ENCODE measurements at regions of chr15 and their contacts with region 1.

Region 1: DNA sequence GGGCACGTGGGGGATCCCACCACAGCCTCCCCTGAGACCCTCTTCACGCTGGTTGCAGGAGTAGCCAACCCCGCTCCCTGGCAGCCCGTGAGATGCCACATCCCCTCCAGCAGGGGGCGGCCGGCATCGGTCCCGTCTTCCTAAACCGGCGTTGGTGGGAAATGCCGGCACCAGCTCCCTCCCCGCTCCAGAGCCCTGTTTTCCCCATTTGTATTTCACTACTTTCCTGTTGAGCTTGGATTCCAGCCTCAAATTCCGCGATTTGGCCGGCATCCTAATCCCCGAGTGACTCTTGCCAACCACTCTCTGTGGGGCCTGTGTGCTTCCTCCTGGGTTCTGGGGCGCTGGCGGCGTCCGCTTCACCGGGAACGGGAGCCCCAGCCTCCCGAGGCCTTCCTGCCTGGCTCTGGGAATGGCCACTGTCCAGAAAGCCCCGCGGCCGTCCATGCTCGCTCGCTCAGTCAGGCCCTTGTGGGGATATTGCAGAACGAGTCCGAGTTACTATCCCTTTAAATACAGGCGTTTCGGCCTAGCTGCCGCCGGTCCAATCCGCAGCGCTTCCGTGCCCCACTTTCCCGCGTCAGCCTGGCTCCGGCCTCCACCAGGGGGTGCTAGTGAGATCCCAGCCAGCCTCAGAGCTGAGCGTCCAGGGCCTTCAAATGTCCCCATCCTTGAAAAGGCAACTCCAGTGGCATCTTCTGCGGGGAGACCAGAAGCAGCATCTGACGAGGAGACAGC is 8.1 kb upstream of the ADAMTS17 start:
- DNase-seq: peak; percentile 92
- H3K4me3 ChIP-seq: peak overlapping the region; percentile 57 to 58; a peak in 3 of 4 replicates
- H3K27ac ChIP-seq: peak overlapping the region in 1 of 2 experiments; percentile 79; a peak in 2 of 4 replicates
- H3K4me1 ChIP-seq: peaks cover 0 to 3% of the 10 kb centered on the region in 2 experiments; a peak in 1 of 4 replicates
- H3K27me3 ChIP-seq: no peaks in the 10 kb centered on the region
- CTCF ChIP-seq: peak; percentile 46
- EP300 ChIP-seq: no peak
- RAD21 ChIP-seq: peak; percentile 66

Region 2: GRCh38 chr15:100078511-100079220 is 271.2 kb before region 1 on chr15:
- CTCF ChIA-PET with region 1: no interaction called
- POLR2A ChIA-PET with region 1: no interaction called
- DNase-seq: no peak
- H3K4me3 ChIP-seq: no peak overlapping the region
- H3K27ac ChIP-seq: no peak overlapping the region
- H3K4me1 ChIP-seq: no peaks in the 10 kb centered on the region
- H3K27me3 ChIP-seq: no peaks in the 10 kb centered on the region
- CTCF ChIP-seq: no peak
- EP300 ChIP-seq: no peak
- RAD21 ChIP-seq: no peak

Region 3: DNA sequence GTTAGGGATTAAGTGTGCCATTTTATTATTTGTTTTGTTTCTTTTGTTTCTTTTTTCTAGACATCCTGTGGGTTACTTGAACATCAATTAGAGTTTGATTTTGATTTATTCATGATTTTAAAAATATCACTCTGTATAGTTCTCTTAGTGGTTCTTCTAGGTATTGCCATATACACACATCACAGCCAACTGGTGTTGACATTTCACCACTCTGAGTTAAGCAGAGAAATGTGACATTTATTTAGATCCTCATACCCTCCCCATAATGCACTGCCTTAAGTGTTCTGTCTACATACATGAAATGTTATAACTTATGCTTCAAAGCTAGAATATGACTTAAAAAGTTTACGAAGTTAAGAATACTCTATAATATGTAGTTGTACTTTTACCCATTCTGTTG is 171.7 kb before region 1 on chr15:
- CTCF ChIA-PET with region 1: no interaction called
- POLR2A ChIA-PET with region 1: no interaction called
- DNase-seq: no peak
- H3K4me3 ChIP-seq: no peak overlapping the region
- H3K27ac ChIP-seq: no peak overlapping the region
- H3K4me1 ChIP-seq: no peaks in the 10 kb centered on the region
- H3K27me3 ChIP-seq: no peaks in the 10 kb centered on the region
- CTCF ChIP-seq: no peak
- EP300 ChIP-seq: no peak
- RAD21 ChIP-seq: no peak

Region 4: GRCh38 chr15:100311154-100311625 is 38.7 kb before region 1 on chr15:
- CTCF ChIA-PET with region 1: interaction called, 10 read pairs
- POLR2A ChIA-PET with region 1: no interaction called
- DNase-seq: peak; percentile 41
- H3K4me3 ChIP-seq: no peak overlapping the region
- H3K27ac ChIP-seq: no peak overlapping the region; a peak in 1 of 4 replicates
- H3K4me1 ChIP-seq: peaks cover 0 to 12% of the 10 kb centered on the region in 2 experiments; a peak in 1 of 4 replicates
- H3K27me3 ChIP-seq: no peaks in the 10 kb centered on the region
- CTCF ChIP-seq: no peak
- EP300 ChIP-seq: no peak
- RAD21 ChIP-seq: no peak

Region 5: DNA sequence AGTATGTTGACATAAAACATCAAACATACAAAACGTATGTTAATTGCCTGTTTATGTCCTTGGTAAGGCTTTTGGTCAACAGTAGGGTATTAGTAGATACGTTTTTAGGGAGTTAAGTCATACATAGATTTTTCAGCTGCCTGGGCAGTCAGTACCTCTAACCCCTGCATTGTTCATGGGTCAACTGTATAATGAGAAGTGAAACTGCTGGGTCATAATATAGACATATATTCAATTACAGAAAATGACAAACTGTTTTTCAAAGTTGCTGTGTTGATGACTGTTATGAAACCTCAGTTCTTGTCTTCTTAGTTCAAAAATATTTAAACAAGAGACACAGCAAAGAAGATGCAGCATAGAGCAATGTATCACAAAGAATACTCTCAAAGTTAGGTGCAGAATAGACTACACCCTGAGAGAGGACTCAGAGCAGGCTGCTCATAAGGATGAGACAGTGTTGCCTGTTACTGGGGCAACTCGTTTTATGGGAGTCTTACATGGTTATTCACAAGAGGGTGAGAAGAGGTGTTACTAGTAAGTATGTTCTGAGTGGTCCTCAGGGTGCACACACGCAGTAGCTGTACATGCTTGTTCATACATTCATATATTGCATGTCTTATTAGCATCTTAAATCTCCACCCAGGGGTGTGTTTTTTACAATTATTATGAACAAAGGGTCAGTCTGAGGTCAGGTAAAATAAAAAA is 45.0 kb after region 1 on chr15:
- CTCF ChIA-PET with region 1: interaction called, 184 read pairs
- POLR2A ChIA-PET with region 1: no interaction called
- DNase-seq: no peak
- H3K4me3 ChIP-seq: no peak overlapping the region
- H3K27ac ChIP-seq: no peak overlapping the region
- H3K4me1 ChIP-seq: no peaks in the 10 kb centered on the region
- H3K27me3 ChIP-seq: no peaks in the 10 kb centered on the region
- CTCF ChIP-seq: no peak
- EP300 ChIP-seq: no peak
- RAD21 ChIP-seq: no peak

Region 6: GRCh38 chr15:100526027-100526481 is 176.2 kb after region 1 on chr15:
- CTCF ChIA-PET with region 1: interaction called, 11 read pairs
- POLR2A ChIA-PET with region 1: no interaction called
- DNase-seq: no peak
- H3K4me3 ChIP-seq: no peak overlapping the region
- H3K27ac ChIP-seq: no peak overlapping the region
- H3K4me1 ChIP-seq: no peaks in the 10 kb centered on the region
- H3K27me3 ChIP-seq: no peaks in the 10 kb centered on the region
- CTCF ChIP-seq: no peak
- EP300 ChIP-seq: no peak
- RAD21 ChIP-seq: no peak

Region 7: DNA sequence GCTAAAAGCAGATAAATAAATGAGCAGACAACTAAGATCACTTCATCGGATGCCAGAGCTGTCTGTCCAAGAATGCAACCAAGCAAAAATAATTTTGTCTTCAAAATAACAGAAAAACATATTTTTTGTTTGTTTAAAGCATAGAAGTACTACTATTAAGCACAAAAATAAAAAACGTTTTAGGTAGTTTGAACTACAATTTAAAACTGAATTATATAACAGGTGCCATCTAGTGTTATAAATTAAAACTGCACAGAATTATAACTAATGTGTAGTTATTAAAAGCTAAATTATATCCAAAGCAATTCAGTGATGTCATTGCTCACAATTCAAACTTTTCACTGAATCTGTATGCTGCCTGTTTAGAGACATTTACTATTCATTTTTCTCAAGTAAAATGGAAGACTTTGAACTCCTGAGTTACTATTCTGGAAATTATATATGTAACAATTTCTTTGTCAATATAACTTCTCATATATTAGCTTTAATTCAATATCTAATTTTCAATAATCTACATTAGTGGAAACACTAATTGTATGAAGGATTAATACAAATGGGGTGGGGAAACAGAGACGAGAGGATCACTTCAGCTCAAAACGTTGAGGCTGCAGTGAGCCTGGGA is 222.6 kb after region 1 on chr15:
- CTCF ChIA-PET with region 1: interaction called, 130 read pairs
- POLR2A ChIA-PET with region 1: no interaction called
- DNase-seq: no peak
- H3K4me3 ChIP-seq: no peak overlapping the region
- H3K27ac ChIP-seq: no peak overlapping the region
- H3K4me1 ChIP-seq: no peaks in the 10 kb centered on the region
- H3K27me3 ChIP-seq: no peaks in the 10 kb centered on the region
- CTCF ChIP-seq: peak; percentile 67
- EP300 ChIP-seq: no peak
- RAD21 ChIP-seq: no peak

Region 8: GRCh38 chr15:100602064-100602822 is 252.4 kb after region 1 on chr15 and contains the starts of genes ASB7 and LINS1:
- CTCF ChIA-PET with region 1: interaction called, 18 read pairs
- POLR2A ChIA-PET with region 1: no interaction called
- DNase-seq: peak; percentile 94
- H3K4me3 ChIP-seq: peak within 1 kb of the TSS; percentile 89 to 99
- H3K27ac ChIP-seq: peak within 1 kb of the TSS; percentile 63 to 87
- H3K4me1 ChIP-seq: peaks cover 5 to 18% of the 10 kb centered on the region in 2 experiments; a peak in 3 of 4 replicates
- H3K27me3 ChIP-seq: no peaks in the 10 kb centered on the region
- CTCF ChIP-seq: no peak
- EP300 ChIP-seq: peak in 1 of 2 experiments; percentile 4; a peak in 1 of 4 replicates
- RAD21 ChIP-seq: no peak
- polyA plus RNA-seq, gene ASB7: 6.1 and 7.7 TPM in 2 replicates
- polyA plus RNA-seq, gene LINS1: 5.0 and 6.9 TPM in 2 replicates